Activated T-helper 2 cell treated with anti-CD3 and anti-CD28 coated beads, Interferon-gamma antibody, Interleukin-2, Interleukin-4, amounts not matched to agents 10 μg/mL and 5 μg/mL and 100 μg/mL, durations not matched to agents 14 hours and 24 hours and 36 hours (primary cell): ENCODE measurements at regions of chr1 and their contacts with region 1.

Region 1: GRCh38 chr1:44217809-44218410 is 4.6 kb downstream of the DMAP1 start:
- DNase-seq: peak; percentile 62
- H3K4me3 Mint-ChIP-seq: no peak overlapping the region
- H3K27ac Mint-ChIP-seq: no peak overlapping the region
- H3K4me1 Mint-ChIP-seq: peaks cover 14% of the 10 kb centered on the region
- H3K27me3 Mint-ChIP-seq: no peaks in the 10 kb centered on the region

Region 2: DNA sequence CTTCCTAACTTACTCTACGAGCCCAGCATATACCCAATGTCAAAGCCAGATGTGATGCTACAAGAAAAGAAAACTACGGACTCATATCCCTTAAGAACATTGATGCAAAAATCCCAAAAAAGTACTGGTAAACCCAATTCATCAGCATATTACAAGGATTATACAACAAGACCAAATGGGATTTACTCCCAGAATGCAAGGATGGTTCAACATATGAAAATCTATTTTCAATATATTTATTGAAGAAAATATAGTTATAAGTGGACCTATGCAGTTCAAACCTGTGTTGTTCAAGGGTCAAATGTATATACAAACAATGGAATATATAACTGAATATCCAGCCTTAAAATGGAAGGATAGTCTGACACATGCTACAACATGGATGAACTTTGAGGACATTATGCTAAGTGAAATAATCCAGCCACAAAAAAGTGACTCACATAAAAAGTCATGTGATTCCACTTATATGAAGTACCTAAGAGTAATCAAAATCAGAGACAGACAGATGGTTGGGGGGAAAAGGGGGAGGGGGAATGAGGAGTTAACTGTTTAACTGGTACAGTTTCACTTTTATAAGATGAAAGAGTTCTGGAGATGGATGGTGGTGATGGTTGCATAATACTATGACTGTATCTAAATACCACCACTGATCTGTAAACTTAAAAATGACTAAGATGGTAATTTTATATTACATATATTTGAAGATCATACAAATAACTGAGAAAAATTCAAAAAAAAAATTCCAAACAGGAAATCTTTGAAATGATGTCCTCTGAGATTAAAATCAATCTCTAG is 72.8 kb before region 1 on chr1:
- intact Hi-C with region 1: no loop called
- DNase-seq: no peak
- H3K4me3 Mint-ChIP-seq: no peak overlapping the region
- H3K27ac Mint-ChIP-seq: no peak overlapping the region
- H3K4me1 Mint-ChIP-seq: no peaks in the 10 kb centered on the region
- H3K27me3 Mint-ChIP-seq: peaks cover 5% of the 10 kb centered on the region

Region 3: DNA sequence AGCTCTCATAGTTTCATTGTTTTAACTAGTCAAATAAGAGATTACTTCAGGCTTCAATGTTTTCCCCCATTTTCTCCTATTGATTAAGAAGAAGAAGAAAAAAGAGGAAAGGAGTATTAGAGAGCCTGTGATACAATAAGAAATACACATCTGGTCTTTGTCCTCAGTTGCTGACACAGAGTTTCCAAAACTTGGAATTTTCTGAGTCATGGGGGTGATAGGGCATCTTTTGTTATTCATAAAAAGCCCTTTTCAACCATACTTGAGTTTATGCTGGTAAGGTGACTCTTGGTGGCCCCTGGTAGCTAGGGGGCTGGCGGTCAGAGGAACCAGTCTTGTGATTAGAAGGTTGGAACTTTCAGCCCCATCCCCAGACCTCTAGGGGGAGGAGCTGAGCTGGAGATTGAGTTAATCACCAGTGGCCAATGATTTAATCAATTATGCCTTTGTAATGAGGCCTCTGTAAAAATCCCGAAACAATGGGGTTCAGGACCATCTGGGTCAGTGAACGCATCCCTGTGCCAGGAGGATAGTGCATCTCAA is 47.6 kb before region 1 on chr1:
- intact Hi-C with region 1: no loop called
- DNase-seq: no peak
- H3K4me3 Mint-ChIP-seq: no peak overlapping the region
- H3K27ac Mint-ChIP-seq: no peak overlapping the region
- H3K4me1 Mint-ChIP-seq: peaks cover 6% of the 10 kb centered on the region
- H3K27me3 Mint-ChIP-seq: peaks cover 11% of the 10 kb centered on the region

Region 4: GRCh38 chr1:44318097-44319088 is 100.5 kb after region 1 on chr1:
- intact Hi-C with region 1: loop called (anchors 1 kb)
- DNase-seq: peak; percentile 19
- H3K4me3 Mint-ChIP-seq: no peak overlapping the region
- H3K27ac Mint-ChIP-seq: no peak overlapping the region
- H3K4me1 Mint-ChIP-seq: peaks cover 21% of the 10 kb centered on the region
- H3K27me3 Mint-ChIP-seq: no peaks in the 10 kb centered on the region

Region 5: DNA sequence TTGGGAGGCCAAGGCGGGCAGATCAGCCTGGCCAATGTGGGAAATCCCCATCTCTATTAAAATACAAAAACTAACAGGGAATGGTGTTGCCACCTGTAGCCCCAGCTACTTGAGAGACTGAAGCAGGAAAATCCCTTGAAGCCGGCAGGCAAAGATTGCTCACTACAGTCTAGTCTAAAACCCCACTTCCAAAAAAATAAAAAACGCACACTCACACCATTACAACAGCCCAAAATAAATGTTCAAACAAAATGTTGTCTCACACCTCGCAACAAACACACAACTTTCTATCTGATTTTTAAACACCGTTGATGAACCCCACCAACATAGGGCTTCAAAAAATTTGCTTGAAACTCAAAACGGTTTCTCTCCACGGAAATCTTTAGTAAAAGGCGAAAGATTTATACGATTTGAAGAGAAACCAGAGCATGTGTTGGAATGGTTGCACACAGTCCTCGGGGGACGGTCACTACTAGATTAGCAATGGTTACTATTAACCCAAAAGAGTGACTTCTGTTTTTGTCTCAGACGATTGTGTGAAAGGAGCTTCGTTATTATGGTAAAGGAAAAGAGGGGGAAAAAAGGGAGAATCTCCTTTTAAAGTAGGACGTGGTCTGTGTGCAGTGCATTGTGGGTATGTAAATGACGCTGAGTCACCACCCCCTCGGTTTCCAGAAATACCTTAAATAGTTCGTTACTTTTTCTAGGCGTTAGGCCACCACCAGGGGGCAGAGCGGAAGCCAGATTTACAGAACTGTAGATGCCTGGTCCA is 513.0 kb after region 1 on chr1 and contains the start of gene RNU5D-1:
- intact Hi-C with region 1: no loop called
- DNase-seq: peak; percentile 88
- H3K4me3 Mint-ChIP-seq: peak within 1 kb of the TSS; percentile 70
- H3K27ac Mint-ChIP-seq: peak within 1 kb of the TSS; percentile 100
- H3K4me1 Mint-ChIP-seq: peaks cover 33% of the 10 kb centered on the region
- H3K27me3 Mint-ChIP-seq: no peaks in the 10 kb centered on the region
- total RNA-seq, gene RNU5D-1: not detected in 2 replicates

Region 6: DNA sequence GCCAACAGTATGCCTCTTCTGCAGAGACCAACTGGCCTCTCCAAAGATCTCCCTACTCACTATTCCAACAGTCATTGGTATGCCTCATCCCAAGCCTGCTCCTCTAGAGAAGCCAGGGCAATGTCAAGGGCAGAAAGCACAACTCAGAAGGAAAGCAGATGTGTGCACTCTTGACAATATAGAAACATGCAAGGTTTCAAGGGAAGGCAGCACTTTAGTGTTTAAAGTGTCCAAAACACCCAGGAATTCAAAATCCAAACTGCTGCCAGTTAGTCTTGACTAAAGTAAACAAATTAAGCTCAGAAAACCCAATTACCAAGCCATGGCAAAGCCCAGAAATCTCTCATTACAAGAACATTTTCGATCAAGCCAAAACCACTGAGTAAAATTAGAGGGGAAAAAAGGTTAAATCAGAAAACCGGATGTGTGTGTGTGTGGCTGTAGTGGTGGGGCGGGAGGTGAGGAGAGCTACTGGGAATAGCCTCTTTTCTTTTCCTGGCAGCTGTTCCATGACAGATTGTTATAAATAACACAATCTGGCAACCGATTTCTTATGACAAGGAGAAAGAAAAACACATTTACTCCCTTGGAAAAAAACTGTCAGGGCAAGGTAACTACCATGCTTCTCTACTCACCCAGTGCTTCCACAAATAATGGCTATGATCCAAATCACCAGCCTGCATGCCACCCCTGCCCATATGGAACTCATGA is 729.3 kb after region 1 on chr1:
- intact Hi-C with region 1: no loop called
- DNase-seq: no peak
- H3K4me3 Mint-ChIP-seq: no peak overlapping the region
- H3K27ac Mint-ChIP-seq: peak overlapping the region; percentile 30
- H3K4me1 Mint-ChIP-seq: peaks cover 19% of the 10 kb centered on the region
- H3K27me3 Mint-ChIP-seq: no peaks in the 10 kb centered on the region